H1 (cell line): ENCODE measurements at regions of chr17 and their contacts with region 1.

Region 1: GRCh38 chr17:17568749-17569195 is 22.7 kb downstream of the PEMT start:
- DNase-seq: peak; percentile 54 to 97
- H3K4me3 ChIP-seq: no peak overlapping the region
- H3K27ac ChIP-seq: no peak overlapping the region
- H3K4me1 ChIP-seq: peaks cover 0 to 13% (median 8%) of the 10 kb centered on the region in 4 experiments; a peak in 5 of 7 replicates
- H3K27me3 ChIP-seq: no peaks in the 10 kb centered on the region
- CTCF ChIP-seq: peak; percentile 91 to 98 (median 96)
- EP300 ChIP-seq: no peak
- POLR2A ChIP-seq: no peak
- RAD21 ChIP-seq: peak; percentile 83 to 85

Region 2: GRCh38 chr17:17506811-17507464 is 61.8 kb before region 1 on chr17:
- CTCF ChIA-PET with region 1: interaction called, 40 read pairs
- POLR2A ChIA-PET with region 1: interaction called, 4 read pairs
- DNase-seq: no peak
- H3K4me3 ChIP-seq: no peak overlapping the region
- H3K27ac ChIP-seq: no peak overlapping the region
- H3K4me1 ChIP-seq: peaks cover 0 to 2% (median 0%) of the 10 kb centered on the region in 4 experiments; a peak in 1 of 7 replicates
- H3K27me3 ChIP-seq: no peaks in the 10 kb centered on the region; a peak in 1 of 7 replicates
- CTCF ChIP-seq: no peak
- EP300 ChIP-seq: no peak
- POLR2A ChIP-seq: no peak
- RAD21 ChIP-seq: no peak

Region 3: GRCh38 chr17:17523001-17523730 is 45.6 kb before region 1 on chr17:
- CTCF ChIA-PET with region 1: interaction called, 35 read pairs
- POLR2A ChIA-PET with region 1: no interaction called
- DNase-seq: no peak
- H3K4me3 ChIP-seq: no peak overlapping the region
- H3K27ac ChIP-seq: no peak overlapping the region
- H3K4me1 ChIP-seq: peaks cover 0 to 17% (median 10%) of the 10 kb centered on the region in 4 experiments; a peak in 6 of 7 replicates
- H3K27me3 ChIP-seq: no peaks in the 10 kb centered on the region
- CTCF ChIP-seq: 0 out of 4 replicates have a peak, but pooled peaks of 1 of the 3 experiments have one; percentile 5
- EP300 ChIP-seq: no peak
- POLR2A ChIP-seq: no peak
- RAD21 ChIP-seq: no peak

Region 4: GRCh38 chr17:17546399-17547185 is 22.2 kb before region 1 on chr17:
- CTCF ChIA-PET with region 1: interaction called, 22 read pairs
- POLR2A ChIA-PET with region 1: interaction called, 3 read pairs
- DNase-seq: no peak
- H3K4me3 ChIP-seq: no peak overlapping the region
- H3K27ac ChIP-seq: no peak overlapping the region
- H3K4me1 ChIP-seq: no peaks in the 10 kb centered on the region; a peak in 1 of 7 replicates
- H3K27me3 ChIP-seq: no peaks in the 10 kb centered on the region
- CTCF ChIP-seq: no peak
- EP300 ChIP-seq: no peak
- POLR2A ChIP-seq: no peak
- RAD21 ChIP-seq: no peak

Region 5: DNA sequence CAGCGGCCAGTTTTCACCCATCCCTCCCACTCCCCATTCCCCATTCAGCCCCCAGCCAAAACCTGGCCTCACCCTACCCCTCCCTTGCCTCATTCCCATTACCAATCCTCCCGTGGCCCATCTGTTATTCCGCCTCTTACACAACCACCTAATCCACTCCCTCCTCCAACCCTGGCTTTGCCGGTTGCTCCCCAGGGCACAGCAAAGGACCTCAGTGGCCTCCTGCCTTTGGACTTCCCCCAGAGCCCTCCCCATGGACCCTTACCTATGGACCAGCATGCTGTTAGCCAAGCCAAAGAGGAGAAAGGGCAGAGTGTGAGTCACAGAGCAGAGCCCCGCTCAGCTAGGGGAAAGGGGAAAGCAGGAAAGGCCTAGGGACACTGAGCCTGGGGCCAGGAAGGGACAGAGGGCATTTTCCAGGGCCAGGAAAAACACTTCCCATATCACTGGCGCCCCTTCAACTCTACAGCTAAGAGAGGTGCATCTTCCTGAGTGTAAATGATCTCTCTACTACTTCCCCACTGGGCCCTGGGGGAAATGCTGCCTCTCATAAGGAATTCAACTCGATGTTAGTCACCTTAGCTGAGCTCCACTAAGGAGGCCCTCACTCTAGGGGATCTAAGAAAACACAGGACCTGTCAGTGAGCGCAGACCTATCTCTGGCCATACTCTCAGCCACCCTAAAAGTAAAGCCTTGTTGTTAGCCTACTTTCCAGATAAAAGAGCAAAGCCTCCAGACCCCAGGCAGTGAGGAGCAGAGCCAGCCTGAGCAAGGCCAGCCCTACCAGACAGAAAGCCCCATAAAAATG is 12.1 kb after region 1 on chr17:
- CTCF ChIA-PET with region 1: interaction called, 56 read pairs
- POLR2A ChIA-PET with region 1: interaction called, 5 read pairs
- DNase-seq: no peak
- H3K4me3 ChIP-seq: no peak overlapping the region
- H3K27ac ChIP-seq: no peak overlapping the region
- H3K4me1 ChIP-seq: no peaks in the 10 kb centered on the region
- H3K27me3 ChIP-seq: no peaks in the 10 kb centered on the region
- CTCF ChIP-seq: no peak
- EP300 ChIP-seq: no peak
- POLR2A ChIP-seq: no peak
- RAD21 ChIP-seq: no peak

Region 6: GRCh38 chr17:17613708-17614114 is 44.9 kb after region 1 on chr17:
- CTCF ChIA-PET with region 1: interaction called, 15 read pairs
- POLR2A ChIA-PET with region 1: no interaction called
- DNase-seq: peak in 1 of 2 experiments; percentile 78
- H3K4me3 ChIP-seq: no peak overlapping the region
- H3K27ac ChIP-seq: no peak overlapping the region
- H3K4me1 ChIP-seq: peaks cover 0 to 3% (median under 1%) of the 10 kb centered on the region in 4 experiments; a peak in 4 of 7 replicates
- H3K27me3 ChIP-seq: no peaks in the 10 kb centered on the region
- CTCF ChIP-seq: peak in 2 of 3 experiments; percentile 64 to 82; a peak in 3 of 4 replicates
- EP300 ChIP-seq: no peak
- POLR2A ChIP-seq: no peak
- RAD21 ChIP-seq: peak; percentile 42 to 70